ENCODE measurements at regions of chr9 and their contacts with region 1.

Region 1: DNA sequence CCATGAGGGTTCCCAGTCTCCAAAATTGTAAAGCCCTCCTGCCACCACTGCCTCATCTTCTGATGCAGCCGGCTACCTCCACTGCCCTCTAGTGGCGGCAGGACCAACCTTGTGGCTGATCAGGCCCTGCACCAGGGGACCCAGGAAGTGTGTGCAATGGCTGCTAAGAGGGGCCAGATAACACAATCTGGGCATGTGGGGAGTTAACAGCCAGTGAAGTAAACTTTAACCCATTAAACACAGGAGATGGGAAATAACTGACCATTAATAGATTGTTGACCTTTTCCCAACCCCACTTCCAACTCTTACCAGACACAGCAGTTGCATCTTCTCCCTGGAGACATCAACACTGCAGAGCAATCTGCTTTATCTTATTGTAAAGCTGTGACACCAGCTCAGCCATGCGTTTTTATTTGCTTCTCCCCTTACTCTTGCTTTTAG is 63.3 kb downstream of the FREM1 start:
- DNase-seq: peak; percentile 56
- H3K4me3 ChIP-seq: no peak overlapping the region
- H3K27ac ChIP-seq: no peak overlapping the region
- H3K4me1 ChIP-seq: no peaks in the 10 kb centered on the region
- H3K27me3 ChIP-seq: no peaks in the 10 kb centered on the region
- CTCF ChIP-seq: peak; percentile 43 to 67 (median 51)
- EP300 ChIP-seq: no peak
- POLR2A ChIP-seq: no peak

Region 2: GRCh38 chr9:14779566-14780022 is 67.3 kb before region 1 on chr9:
- in situ Hi-C with region 1: no loop called
- intact Hi-C with region 1: loop called (anchors 2 kb)
- DNase-seq: no peak
- H3K4me3 ChIP-seq: no peak overlapping the region
- H3K27ac ChIP-seq: no peak overlapping the region
- H3K4me1 ChIP-seq: no peaks in the 10 kb centered on the region
- H3K27me3 ChIP-seq: no peaks in the 10 kb centered on the region
- CTCF ChIP-seq: no peak
- EP300 ChIP-seq: no peak
- POLR2A ChIP-seq: no peak

Region 3: DNA sequence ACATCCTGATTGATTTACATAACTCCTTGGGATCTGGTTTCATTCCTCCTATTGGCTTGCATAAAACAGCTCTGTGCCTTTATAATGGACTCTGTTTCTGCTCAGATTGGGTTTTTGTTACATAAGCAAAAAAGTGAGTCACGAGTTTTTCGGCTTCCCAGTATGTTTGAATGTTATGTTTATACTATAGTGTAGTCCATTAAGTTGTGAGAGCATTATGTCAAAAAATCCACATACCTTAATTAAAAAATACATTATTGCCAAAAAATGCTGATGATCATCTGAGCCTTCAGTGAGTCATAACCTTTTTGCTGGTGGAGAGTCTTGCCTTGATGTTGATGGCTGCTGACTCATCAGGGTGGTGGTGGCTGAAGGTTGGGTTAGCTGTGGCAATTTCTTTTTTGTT is 850.6 kb after region 1 on chr9:
- in situ Hi-C with region 1: no loop called
- intact Hi-C with region 1: no loop called
- DNase-seq: no peak
- H3K4me3 ChIP-seq: no peak overlapping the region
- H3K27ac ChIP-seq: no peak overlapping the region
- H3K4me1 ChIP-seq: no peaks in the 10 kb centered on the region
- H3K27me3 ChIP-seq: no peaks in the 10 kb centered on the region
- CTCF ChIP-seq: no peak
- EP300 ChIP-seq: no peak
- POLR2A ChIP-seq: no peak

Measured in transverse colon (tissue), 4 donors.